Heart left ventricle (tissue), 16 donors: ENCODE measurements at regions of chr7 and their contacts with region 1.

Region 1: GRCh38 chr7:29105752-29106668 is 40.3 kb downstream of the CPVL start:
- DNase-seq: peak in 2 of 5 donors; percentile 53
- ATAC-seq: peak; percentile 70 to 81 (median 80)
- H3K4me3 ChIP-seq: no peak overlapping the region
- H3K27ac ChIP-seq: no peak overlapping the region
- H3K4me1 ChIP-seq: peaks cover 0 to 30% (median 5%) of the 10 kb centered on the region in 12 donors
- H3K27me3 ChIP-seq: no peaks in the 10 kb centered on the region
- CTCF ChIP-seq: peak; percentile 68 to 91 (median 85)
- POLR2A ChIP-seq: no peak

Region 2: DNA sequence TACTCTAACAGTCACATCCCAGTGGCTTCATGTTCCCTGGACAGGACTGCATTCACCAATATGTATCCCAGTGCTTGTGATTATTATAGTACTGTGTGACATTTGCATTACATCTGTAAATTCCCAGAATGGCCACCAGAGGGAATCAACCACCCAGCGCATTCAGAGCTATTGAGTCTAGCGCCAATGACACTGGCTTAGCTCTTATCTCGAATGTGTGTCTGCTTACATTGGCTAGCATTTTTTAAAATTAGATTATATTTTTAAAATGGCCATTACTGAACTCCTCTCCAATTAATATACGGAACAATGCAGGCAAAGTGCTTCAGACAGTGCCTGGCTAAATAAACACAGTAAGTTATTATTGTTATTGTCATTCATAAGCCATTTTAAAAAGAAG is 184.2 kb before region 1 on chr7:
- intact Hi-C with region 1: loop called (anchors 1 to 2 kb)
- DNase-seq: peak in 3 of 5 donors; percentile 42 to 45 (median 44)
- ATAC-seq: peak; percentile 88 to 95 (median 92)
- H3K4me3 ChIP-seq: no peak overlapping the region
- H3K27ac ChIP-seq: no peak overlapping the region
- H3K4me1 ChIP-seq: peaks cover 0 to 22% (median 12%) of the 10 kb centered on the region in 12 donors
- H3K27me3 ChIP-seq: peaks cover 0 to 8% (median 0%) of the 10 kb centered on the region in 9 donors
- CTCF ChIP-seq: peak; percentile 72 to 94 (median 85)
- POLR2A ChIP-seq: no peak

Region 3: GRCh38 chr7:28926871-28927597 is 179.0 kb before region 1 on chr7:
- intact Hi-C with region 1: loop called (anchors 1 to 2 kb)
- DNase-seq: peak; percentile 76 to 82 (median 79)
- ATAC-seq: peak; percentile 78 to 95 (median 94)
- H3K4me3 ChIP-seq: peak overlapping the region; percentile 8 to 64 (median 52)
- H3K27ac ChIP-seq: peak overlapping the region in 11 of 12 donors; percentile 15 to 63 (median 49)
- H3K4me1 ChIP-seq: peaks cover 0 to 22% (median 15%) of the 10 kb centered on the region in 12 donors
- H3K27me3 ChIP-seq: peaks cover 0 to 8% (median 0%) of the 10 kb centered on the region in 9 donors
- CTCF ChIP-seq: peak; percentile 72 to 90 (median 84)
- POLR2A ChIP-seq: no peak

Region 4: DNA sequence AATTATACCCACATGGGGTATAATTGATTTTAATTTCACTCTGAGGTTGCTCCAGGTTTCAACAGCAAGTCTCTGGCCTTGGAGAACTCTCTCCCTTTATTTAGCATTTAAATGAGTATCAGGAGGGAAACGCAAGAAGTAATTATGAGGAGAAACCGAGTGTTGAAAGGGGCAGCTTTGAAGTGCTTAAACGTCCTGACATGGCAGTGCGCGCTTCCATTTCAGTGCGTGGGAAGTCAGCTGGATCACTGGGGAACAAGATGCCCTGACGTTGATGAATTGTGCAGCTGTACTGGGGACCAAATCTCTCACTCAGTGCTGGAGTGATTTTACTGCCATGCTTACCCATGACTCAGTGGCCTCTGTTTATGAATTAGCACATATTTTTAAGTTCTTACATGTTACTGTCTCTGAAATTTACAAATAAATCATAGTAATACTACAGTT is 351.6 kb after region 1 on chr7:
- intact Hi-C with region 1: no loop called
- DNase-seq: no peak
- ATAC-seq: peak in 2 of 4 donors; percentile 46 to 57
- H3K4me3 ChIP-seq: no peak overlapping the region
- H3K27ac ChIP-seq: no peak overlapping the region
- H3K4me1 ChIP-seq: peaks cover 0 to 18% (median 0%) of the 10 kb centered on the region in 12 donors
- H3K27me3 ChIP-seq: no peaks in the 10 kb centered on the region
- CTCF ChIP-seq: no peak
- POLR2A ChIP-seq: no peak